ENCODE measurements at regions of chr15 and their contacts with region 1.

Region 1: DNA sequence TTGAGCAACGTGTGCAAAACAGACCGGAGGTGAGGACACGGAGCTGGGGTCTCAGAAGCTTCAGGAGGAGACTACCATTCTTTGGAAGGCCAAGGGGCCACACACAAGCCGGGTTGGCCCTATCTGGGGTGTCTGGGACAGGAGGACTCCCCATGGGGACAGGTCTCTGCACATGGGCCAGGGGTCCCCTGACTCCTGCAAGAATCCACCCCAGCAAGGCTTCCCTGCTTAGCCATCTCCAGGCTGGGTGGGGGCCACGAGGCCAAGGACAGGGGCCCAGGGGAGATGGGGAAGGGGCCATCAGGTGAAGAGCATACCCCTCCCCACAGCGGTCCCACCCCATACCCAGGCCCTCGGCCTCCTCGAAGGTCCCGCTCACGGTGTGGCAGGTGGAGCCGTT is 38.5 kb downstream of the ADAMTS7 start:
- DNase-seq: no peak
- ATAC-seq: no peak
- H3K4me3 ChIP-seq: no peak overlapping the region
- H3K27ac ChIP-seq: no peak overlapping the region
- H3K4me1 ChIP-seq: peaks cover 0 to 4% (median 0%) of the 10 kb centered on the region in 12 donors
- H3K27me3 ChIP-seq: no peaks in the 10 kb centered on the region
- CTCF ChIP-seq: no peak
- POLR2A ChIP-seq: no peak

Region 2: DNA sequence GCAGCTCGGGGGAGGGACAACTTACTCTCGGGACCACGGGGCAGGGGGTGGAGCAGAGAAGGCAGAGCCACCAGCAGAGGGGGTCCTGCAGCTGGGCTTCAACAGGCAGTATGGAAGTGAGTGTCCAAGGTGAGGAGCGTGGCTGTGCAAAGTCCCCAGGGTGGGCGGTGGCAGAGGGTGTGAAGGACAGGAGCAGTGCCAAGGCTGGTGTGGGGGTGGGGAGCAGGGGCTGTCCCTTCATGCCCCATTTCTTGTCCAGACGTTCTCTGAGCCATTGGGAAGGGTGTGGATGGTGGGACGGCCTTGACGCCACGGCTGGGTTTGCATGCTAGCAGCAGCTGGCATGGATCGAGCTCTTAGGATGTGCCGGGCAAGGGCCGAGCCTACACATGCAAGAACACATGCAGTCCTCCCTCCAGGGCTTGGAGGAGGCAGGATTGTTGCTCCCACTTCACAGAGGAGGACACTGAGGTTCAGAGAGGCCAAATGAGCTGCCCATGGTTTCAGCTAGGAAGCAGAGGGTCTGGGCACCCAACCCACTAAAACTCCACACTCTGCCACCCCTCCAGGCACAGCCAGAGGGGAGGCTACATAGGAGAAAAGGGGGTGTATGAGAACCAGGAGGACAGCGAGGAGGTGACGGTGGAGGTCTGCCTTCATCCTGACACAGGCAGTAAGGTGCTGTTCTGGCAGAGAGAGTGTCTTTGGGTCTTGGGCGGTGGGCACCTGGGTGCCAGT is 788.9 kb before region 1 on chr15:
- intact Hi-C with region 1: loop called in 2 of 10 experiments (anchors 5 to 10 kb)
- DNase-seq: peak in 2 of 5 donors; percentile 9 to 26
- ATAC-seq: no peak
- H3K4me3 ChIP-seq: no peak overlapping the region
- H3K27ac ChIP-seq: no peak overlapping the region
- H3K4me1 ChIP-seq: peaks cover 0 to 10% (median 0%) of the 10 kb centered on the region in 12 donors
- H3K27me3 ChIP-seq: no peaks in the 10 kb centered on the region
- CTCF ChIP-seq: no peak
- POLR2A ChIP-seq: no peak

Region 3: GRCh38 chr15:78750566-78750965 is 22.2 kb before region 1 on chr15:
- intact Hi-C with region 1: no loop called
- DNase-seq: peak in 2 of 5 donors; percentile 32 to 40
- ATAC-seq: peak; percentile 58 to 68 (median 64)
- H3K4me3 ChIP-seq: peak overlapping the region in 9 of 12 donors; percentile 8 to 46 (median 34)
- H3K27ac ChIP-seq: peak overlapping the region in 10 of 12 donors; percentile 7 to 82 (median 77)
- H3K4me1 ChIP-seq: peaks cover 0 to 37% (median 9%) of the 10 kb centered on the region in 12 donors
- H3K27me3 ChIP-seq: no peaks in the 10 kb centered on the region
- CTCF ChIP-seq: no peak
- POLR2A ChIP-seq: no peak

Region 4: DNA sequence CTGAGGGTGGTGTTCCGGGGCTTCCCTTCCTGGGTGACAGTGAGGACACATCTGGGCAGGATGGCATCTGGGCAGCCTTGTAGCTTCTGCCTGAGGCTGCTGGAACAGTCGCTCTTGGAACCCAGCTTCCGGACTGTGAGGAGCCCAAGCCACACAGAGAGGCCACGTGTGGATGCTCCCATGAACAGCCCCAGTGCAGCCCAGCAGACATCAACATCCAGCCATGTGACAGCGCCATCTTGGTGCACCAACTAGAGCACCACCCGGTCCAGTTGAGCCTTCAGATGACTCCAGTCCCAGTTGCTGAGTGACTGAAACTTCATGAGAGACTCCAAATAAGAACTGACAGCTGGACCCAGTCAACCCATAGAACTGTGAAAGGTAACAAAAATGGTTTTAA is 187.6 kb after region 1 on chr15:
- intact Hi-C with region 1: no loop called
- DNase-seq: no peak
- ATAC-seq: no peak
- H3K4me3 ChIP-seq: no peak overlapping the region
- H3K27ac ChIP-seq: no peak overlapping the region
- H3K4me1 ChIP-seq: no peaks in the 10 kb centered on the region
- H3K27me3 ChIP-seq: no peaks in the 10 kb centered on the region
- CTCF ChIP-seq: no peak
- POLR2A ChIP-seq: no peak

Measured in heart left ventricle (tissue), 16 donors.